GM12878 (cell line): ENCODE measurements at regions of chr4 and their contacts with region 1.

Region 1: DNA sequence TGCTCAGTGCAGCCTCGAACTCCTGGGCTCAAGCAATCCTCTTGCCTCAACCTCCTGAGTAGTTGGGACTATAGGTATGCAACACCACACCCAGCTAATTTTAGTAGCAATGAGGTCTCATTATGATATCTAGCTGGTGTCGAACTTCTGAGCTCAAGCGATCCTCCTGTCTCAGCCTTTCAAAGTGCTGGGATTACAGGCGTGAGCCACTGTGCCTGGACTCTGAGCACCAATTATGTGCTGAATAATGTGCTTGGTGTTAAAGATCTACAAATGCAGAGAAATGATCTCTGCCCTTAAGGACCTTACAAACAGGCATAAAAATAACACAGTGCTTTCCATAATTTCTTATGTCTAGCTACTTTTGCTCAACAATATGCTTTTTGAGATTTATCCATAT is 129.0 kb upstream of the CBR4 start:
- DNase-seq: no peak
- ATAC-seq: no peak
- H3K4me3 ChIP-seq: no peak overlapping the region
- H3K27ac ChIP-seq: no peak overlapping the region
- H3K4me1 ChIP-seq: no peaks in the 10 kb centered on the region; the same call in 1 of the 2 replicates
- H3K27me3 ChIP-seq: no peaks in the 10 kb centered on the region
- CTCF ChIP-seq: no peak
- EP300 ChIP-seq: no peak
- POLR2A ChIP-seq: no peak
- RAD21 ChIP-seq: no peak

Region 2: DNA sequence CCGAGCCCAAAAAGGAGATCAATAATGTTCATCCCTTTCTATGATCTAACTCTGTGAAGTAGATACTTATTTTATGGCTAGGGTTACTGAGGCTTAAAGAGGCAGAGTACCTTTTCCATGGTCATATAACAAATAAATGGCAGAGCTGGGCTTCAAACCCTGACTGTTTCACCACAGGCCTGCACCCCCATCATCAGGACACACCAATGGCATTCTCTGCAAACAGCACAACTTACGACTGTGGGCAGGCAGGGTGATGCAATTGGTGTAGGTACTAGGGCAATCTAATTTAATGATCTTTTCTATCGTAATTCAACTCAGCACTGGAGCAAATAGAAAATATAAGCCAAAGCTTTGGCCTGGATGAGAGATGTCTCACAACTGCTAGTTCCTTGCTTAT is 10.1 kb before region 1 on chr4:
- CTCF ChIA-PET with region 1: interaction called, 3 read pairs
- POLR2A ChIA-PET with region 1: no interaction called
- RAD21 ChIA-PET with region 1: no interaction called
- SMC1A ChIA-PET with region 1: interaction called, 10 read pairs
- in situ Hi-C with region 1: no loop called
- intact Hi-C with region 1: no loop called
- DNase-seq: no peak
- ATAC-seq: no peak
- H3K4me3 ChIP-seq: no peak overlapping the region
- H3K27ac ChIP-seq: no peak overlapping the region
- H3K4me1 ChIP-seq: no peaks in the 10 kb centered on the region
- H3K27me3 ChIP-seq: no peaks in the 10 kb centered on the region
- CTCF ChIP-seq: no peak
- EP300 ChIP-seq: no peak
- POLR2A ChIP-seq: no peak
- RAD21 ChIP-seq: no peak

Region 3: DNA sequence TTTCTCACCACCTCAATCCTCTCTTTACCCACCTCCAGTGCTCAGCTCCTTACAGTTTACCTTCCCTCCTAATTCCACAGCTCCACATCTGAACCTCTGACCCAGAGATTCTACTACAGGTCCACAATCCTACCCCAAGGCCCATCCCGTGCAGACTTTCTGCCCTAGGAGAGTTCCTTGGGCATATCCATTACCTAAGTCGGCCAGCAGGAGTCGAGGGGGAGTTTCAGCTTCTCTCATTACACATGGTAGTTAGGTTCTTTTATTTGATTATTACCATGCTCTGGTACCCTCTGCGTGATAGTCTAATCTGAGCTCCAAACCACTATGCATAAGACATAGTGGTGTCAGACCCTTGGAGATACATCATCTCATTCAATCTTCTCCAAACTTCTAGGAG is 13.9 kb after region 1 on chr4:
- CTCF ChIA-PET with region 1: interaction called, 3 read pairs
- POLR2A ChIA-PET with region 1: interaction called, 3 read pairs
- RAD21 ChIA-PET with region 1: no interaction called
- SMC1A ChIA-PET with region 1: interaction called, 14 read pairs
- in situ Hi-C with region 1: no loop called
- intact Hi-C with region 1: no loop called
- DNase-seq: no peak
- ATAC-seq: peak; percentile 36; the same call in 1 of the 3 replicates
- H3K4me3 ChIP-seq: no peak overlapping the region
- H3K27ac ChIP-seq: no peak overlapping the region
- H3K4me1 ChIP-seq: no peaks in the 10 kb centered on the region
- H3K27me3 ChIP-seq: no peaks in the 10 kb centered on the region
- CTCF ChIP-seq: peak in 2 of 3 experiments; percentile 22; a peak in 2 of 6 replicates
- EP300 ChIP-seq: no peak
- POLR2A ChIP-seq: no peak
- RAD21 ChIP-seq: 0 out of 2 replicates have a peak, but pooled peaks have one; percentile 4